Activated CD4-positive, alpha-beta T cell treated with anti-CD3 and anti-CD28 coated beads, Interleukin-2, amount 10 ng/mL, durations not matched to agents 24 days and 14 days (primary cell): ENCODE measurements at regions of chr3 and their contacts with region 1.

Region 1: DNA sequence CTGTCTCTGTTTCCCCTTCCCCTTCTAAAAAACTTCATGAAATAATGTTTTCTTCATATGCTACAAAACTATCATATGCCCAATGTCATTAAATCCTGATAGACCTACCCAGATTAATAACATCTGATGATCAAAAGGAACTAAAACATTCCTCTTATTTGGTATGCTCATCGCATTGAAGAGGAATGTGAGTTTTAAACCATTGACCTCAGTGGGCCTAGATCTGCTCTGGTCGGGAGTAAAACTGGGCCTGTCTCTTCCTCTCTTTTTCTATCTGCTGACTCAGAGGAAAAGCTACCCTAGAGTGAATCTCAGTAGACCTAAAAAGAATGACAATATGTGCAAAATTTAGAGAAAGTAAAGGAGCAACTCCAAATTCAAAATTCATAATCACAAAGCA is 275.8 kb downstream of the SATB1 start:
- DNase-seq: no peak
- H3K4me3 Mint-ChIP-seq: no peak overlapping the region
- H3K27ac Mint-ChIP-seq: no peak overlapping the region
- H3K4me1 Mint-ChIP-seq: no peaks in the 10 kb centered on the region
- H3K27me3 Mint-ChIP-seq: no peaks in the 10 kb centered on the region

Region 2: GRCh38 chr3:17964108-17964507 is 185.3 kb before region 1 on chr3:
- intact Hi-C with region 1: loop called (anchors 10 kb)
- DNase-seq: peak; percentile 40
- H3K4me3 Mint-ChIP-seq: no peak overlapping the region
- H3K27ac Mint-ChIP-seq: no peak overlapping the region
- H3K4me1 Mint-ChIP-seq: no peaks in the 10 kb centered on the region
- H3K27me3 Mint-ChIP-seq: peaks cover 2% of the 10 kb centered on the region

Region 3: DNA sequence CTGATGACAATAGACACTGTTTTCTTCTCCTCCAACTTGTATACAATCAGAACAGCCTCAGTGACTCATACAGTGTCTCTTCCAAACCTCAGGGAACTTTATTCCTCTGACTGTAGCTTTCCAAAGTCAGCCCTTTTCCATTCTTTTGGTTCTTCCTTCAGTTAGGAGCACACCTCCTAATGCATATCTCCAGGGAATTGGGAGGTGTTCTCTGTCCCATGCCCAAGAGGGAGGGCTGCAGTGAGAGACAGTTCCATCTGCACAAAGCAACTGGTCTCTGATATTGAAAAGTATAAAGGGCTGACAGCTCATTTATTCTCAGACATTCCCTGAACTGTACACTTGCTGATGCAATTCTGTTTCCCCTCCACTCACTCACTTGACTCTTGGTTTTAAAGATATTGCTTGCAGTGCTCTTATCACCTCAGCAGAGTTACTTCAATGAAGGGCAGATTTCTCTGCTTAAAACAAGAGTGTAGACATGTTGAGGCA is 69.1 kb before region 1 on chr3:
- intact Hi-C with region 1: no loop called
- DNase-seq: no peak
- H3K4me3 Mint-ChIP-seq: no peak overlapping the region
- H3K27ac Mint-ChIP-seq: no peak overlapping the region
- H3K4me1 Mint-ChIP-seq: no peaks in the 10 kb centered on the region
- H3K27me3 Mint-ChIP-seq: peaks cover 5% of the 10 kb centered on the region